Esophagus muscularis mucosa (tissue), 4 donors: ENCODE measurements at regions of chr1 and their contacts with region 1.

Region 1: GRCh38 chr1:3283849-3284248 is 170.6 kb upstream of the ARHGEF16 start:
- DNase-seq: no peak
- H3K4me3 ChIP-seq: no peak overlapping the region
- H3K27ac ChIP-seq: no peak overlapping the region
- H3K4me1 ChIP-seq: peaks cover 7 to 10% (median 8%) of the 10 kb centered on the region in 4 donors
- H3K27me3 ChIP-seq: peaks cover 0 to 88% (median 0%) of the 10 kb centered on the region in 4 donors
- CTCF ChIP-seq: peak; percentile 64 to 76 (median 64)
- EP300 ChIP-seq: no peak
- POLR2A ChIP-seq: no peak

Region 2: DNA sequence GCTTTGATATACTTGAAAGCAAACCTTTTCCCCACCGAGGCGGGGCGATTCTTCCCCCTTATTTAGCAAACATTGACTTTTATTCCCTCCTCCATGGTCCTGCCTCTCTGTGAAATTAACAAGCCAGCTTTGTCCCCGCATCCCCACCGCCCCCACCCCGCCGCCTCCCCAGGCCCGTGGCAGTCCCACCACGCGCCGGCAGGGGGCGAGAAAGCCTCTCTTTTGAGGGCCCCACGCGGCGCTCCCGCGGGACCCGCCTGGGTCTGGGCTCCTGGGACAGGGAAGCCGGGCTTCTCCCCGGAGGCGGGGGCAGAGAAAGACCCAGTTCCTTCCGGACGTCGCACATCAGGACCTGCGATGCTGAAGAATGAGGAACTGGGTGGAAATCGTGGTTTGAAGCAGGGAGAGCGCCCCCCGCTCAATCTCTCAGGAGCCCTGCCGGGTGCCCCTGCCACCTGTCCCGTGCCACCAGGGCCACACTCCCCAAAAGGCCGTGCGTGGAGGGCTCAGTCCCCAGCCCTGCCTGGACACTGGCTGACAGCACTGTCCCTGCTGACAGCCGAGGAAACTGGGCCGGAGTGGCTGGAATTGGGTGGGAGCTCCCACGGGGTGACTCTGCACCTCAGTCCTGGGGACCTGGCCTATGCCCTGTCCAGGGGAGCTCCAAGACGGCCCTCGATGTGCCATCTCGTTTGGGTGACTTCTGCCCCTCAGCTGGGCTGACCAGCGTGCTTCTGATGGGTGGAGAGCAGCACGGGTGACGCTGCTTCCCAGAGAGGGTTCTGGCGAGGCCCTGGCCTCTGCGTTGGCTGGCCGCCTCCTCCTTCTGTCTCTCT is 271.2 kb before region 1 on chr1:
- intact Hi-C with region 1: loop called (anchors 5 kb)
- DNase-seq: no peak
- H3K4me3 ChIP-seq: peak overlapping the region in 3 of 4 donors; percentile 20 to 31 (median 22)
- H3K27ac ChIP-seq: no peak overlapping the region
- H3K4me1 ChIP-seq: peaks cover 3 to 18% (median 15%) of the 10 kb centered on the region in 4 donors
- H3K27me3 ChIP-seq: peaks cover 3 to 89% (median 17%) of the 10 kb centered on the region in 4 donors
- CTCF ChIP-seq: peak; percentile 57 to 97 (median 94)
- EP300 ChIP-seq: no peak
- POLR2A ChIP-seq: no peak

Region 3: DNA sequence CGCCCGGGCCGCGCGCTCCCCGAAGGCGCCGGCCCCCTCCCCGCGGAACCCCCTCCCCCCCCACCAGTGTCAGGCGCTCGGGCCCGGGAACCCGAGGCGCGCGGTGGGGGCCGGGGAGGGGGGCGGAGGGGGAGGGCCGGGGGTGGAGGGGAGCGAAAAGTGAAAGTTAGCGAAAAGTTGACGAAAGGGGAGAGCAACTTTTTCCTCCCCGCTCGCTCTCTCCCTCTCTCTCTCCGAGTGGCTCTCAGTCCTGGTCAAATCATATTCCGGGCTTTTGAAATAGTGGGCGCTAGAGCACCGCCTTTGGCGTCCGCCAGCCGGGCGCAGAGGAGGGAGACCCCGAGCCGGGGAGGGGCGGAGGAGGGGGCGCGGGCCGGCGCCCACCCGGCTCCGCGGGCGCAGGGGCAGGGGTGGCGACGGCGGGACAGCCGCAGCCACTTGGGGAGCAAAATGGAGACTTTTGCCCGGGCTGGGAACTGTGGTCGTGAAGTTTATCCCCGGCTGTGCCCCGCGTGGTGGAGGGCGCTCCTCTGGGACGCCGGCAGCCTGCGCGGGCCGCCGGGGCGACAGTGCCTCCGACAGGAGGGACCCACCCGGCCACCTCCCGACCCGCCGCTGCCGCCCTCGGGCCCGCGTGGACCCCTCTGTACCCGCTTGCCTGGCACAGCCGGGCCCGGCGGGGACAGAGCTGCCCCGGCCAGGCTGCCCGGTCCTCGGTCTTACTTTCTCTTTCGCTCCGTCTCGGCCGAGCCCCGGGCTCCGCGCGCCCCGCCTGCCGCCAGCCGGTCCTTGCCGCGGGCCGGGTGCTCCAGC is 214.2 kb before region 1 on chr1:
- intact Hi-C with region 1: loop called (anchors 5 kb)
- DNase-seq: no peak
- H3K4me3 ChIP-seq: peak overlapping the region; percentile 77 to 91 (median 87)
- H3K27ac ChIP-seq: peak overlapping the region; percentile 74 to 82 (median 80)
- H3K4me1 ChIP-seq: peaks cover 18 to 68% (median 55%) of the 10 kb centered on the region in 4 donors
- H3K27me3 ChIP-seq: peaks cover 0 to 94% (median 66%) of the 10 kb centered on the region in 4 donors
- CTCF ChIP-seq: peak; percentile 21 to 37 (median 36)
- EP300 ChIP-seq: no peak
- POLR2A ChIP-seq: no peak

Region 4: DNA sequence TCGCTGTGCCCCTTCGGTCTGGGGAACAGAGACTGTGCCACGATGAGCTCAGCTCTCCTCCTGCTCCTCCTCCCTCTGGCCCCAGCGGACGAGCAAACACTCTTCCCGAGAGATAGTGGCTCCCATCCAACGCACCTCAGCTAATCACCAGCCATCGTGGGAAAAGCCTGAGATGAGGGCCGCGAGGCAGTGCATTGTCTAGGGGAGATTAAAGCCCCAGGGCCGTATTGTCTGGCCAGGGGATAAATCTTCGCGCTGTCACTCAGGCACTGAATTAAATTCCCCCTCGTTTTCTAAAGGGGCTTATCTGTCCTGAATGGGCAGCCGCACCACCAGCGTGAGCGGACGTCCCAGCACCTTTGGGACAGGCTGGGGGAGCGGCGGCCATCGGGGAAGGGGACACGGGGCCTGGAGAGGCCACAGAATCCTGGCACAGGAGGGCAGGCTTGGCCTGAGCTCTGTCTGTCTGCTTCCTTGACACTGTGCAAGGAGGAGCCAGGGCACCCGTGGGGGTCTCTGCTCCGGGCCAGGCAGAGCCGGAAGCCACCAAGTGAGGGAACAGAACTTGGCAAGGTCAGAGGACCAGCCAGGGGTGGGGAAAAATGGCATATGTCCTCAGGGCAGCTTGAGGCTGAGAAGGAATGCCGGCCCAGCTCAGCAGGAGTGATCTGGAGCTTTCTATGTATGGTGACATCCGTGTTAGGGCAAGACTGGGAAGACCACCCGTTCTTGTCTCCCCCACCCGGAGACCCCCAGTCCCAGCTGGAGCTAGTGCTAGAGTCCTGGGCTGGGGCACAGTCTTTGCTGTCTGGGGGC is 182.5 kb before region 1 on chr1:
- intact Hi-C with region 1: no loop called
- DNase-seq: no peak
- H3K4me3 ChIP-seq: no peak overlapping the region
- H3K27ac ChIP-seq: no peak overlapping the region
- H3K4me1 ChIP-seq: peaks cover 0 to 28% (median 7%) of the 10 kb centered on the region in 4 donors
- H3K27me3 ChIP-seq: peaks cover 0 to 61% (median 0%) of the 10 kb centered on the region in 4 donors
- CTCF ChIP-seq: no peak
- EP300 ChIP-seq: no peak
- POLR2A ChIP-seq: no peak